Cardiac septum (tissue), 1 donor: ENCODE measurements at regions of chr16 and their contacts with region 1.

Region 1: GRCh38 chr16:30395155-30395991 is at the start of gene ZNF48:
- DNase-seq: peak; percentile 91
- total RNA-seq, gene ZNF48: 6.1 TPM

Region 2: GRCh38 chr16:30354423-30355143 is 40.8 kb before region 1 on chr16:
- intact Hi-C with region 1: loop called (anchors 5 kb)
- DNase-seq: no peak

Region 3: DNA sequence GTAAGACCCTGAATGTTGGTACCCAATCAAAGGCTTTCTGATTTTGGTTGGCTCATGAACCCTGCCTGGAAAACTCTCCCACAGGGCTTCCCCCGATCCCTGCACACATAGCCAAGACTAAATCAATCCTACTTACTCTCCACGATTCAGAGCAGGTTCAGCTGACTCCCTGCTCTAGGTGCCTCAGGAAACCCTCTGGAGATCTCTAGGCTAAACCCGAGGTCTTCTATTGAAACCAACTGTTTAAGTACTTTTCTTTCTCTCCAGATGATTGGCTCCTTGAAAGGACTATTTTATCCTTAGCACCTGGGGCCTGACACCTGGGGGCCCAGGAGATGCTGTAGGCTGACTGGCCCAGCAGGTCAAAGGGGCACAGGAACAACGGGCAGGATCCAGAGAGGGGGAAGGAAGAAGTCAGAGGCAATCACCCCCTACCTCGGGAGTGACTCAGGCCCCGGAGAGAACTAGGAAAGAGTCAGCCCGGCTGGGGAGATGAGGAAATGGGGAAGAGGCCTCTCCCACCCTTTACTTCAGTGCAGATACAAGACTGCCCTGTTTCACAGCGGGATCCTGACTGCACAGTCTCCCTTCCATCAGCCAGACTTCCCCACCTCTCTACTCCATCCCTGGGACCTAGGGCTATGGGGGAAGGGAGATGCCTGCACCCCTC is 27.1 kb before region 1 on chr16:
- intact Hi-C with region 1: no loop called
- DNase-seq: no peak

Region 4: GRCh38 chr16:30378236-30379204 is 16.9 kb before region 1 on chr16:
- intact Hi-C with region 1: loop called (anchors 2 kb)
- DNase-seq: peak; percentile 100

Region 5: DNA sequence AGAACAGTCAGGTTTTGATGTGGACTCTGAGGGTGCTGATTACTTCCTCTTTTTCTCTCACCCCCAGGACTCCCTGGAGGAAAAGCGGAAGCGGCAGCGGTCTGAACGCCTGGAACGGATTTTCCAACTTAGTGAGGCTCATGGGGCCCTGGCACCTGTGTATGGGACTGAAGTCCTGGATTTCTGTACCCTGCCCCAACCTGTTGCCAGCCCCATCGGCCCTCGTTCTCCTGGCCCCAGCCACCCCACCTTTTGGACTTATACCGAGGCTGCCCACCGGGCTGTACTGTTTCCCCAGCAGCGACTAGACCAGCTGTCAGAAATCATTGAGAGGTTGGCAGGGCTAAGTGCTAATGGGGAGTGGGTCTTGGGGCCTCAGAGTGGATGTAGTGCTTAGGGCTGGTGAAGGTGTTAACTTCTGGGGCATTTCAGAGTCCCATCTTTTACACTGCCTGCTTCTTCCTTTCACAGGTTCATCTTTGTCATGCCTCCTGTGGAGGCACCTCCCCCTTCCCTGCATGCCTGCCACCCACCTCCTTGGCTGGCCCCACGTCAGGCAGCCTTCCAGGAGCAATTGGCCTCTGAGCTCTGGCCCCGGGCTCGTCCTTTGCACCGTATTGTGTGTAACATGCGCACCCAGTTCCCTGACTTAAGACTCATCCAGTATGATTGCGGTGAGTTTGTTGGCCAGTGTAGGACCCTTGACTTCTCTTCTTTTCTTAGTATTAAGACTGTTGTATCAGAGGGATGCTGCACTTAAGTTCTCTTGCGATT is 333.7 kb after region 1 on chr16:
- intact Hi-C with region 1: no loop called
- DNase-seq: no peak